ENCODE measurements at regions of chr1 and their contacts with region 1.

Region 1: GRCh38 chr1:10507111-10507879 is 32.5 kb downstream of the PEX14 start:
- H3K4me3 ChIP-seq: no peak overlapping the region
- H3K27ac ChIP-seq: no peak overlapping the region
- H3K4me1 ChIP-seq: peaks cover 6% of the 10 kb centered on the region
- CTCF ChIP-seq: peak; percentile 81

Region 2: GRCh38 chr1:10522322-10522860 is 15.1 kb after region 1 on chr1:
- CTCF ChIA-PET with region 1: interaction called, 19 read pairs
- POLR2A ChIA-PET with region 1: no interaction called
- H3K4me3 ChIP-seq: no peak overlapping the region
- H3K27ac ChIP-seq: no peak overlapping the region
- H3K4me1 ChIP-seq: no peaks in the 10 kb centered on the region
- CTCF ChIP-seq: no peak

Region 3: DNA sequence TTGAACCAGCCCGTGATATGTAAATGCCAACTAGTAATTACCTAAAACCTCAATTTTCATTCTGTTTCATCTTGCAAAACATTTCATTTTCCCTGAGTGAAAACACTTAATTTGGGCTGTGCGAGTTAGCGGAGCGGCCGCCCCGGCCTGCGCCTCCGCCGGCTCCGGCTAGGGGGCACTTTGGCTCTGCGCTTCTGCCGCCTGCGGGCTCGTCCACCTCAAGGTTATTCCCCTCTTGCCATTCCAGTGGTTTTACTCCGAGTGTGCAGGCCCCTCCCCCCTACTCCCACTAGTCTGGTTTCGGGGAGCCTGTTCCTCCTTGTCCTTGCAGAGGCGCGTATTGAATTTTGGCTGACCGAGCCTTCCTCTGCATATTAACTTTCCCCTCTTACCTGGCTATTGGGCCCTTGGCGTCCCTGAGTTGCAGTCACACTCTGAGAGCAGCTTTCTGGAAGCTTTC is 23.0 kb after region 1 on chr1:
- CTCF ChIA-PET with region 1: interaction called, 22 read pairs
- POLR2A ChIA-PET with region 1: no interaction called
- H3K4me3 ChIP-seq: no peak overlapping the region
- H3K27ac ChIP-seq: no peak overlapping the region
- H3K4me1 ChIP-seq: no peaks in the 10 kb centered on the region
- CTCF ChIP-seq: no peak

Region 4: DNA sequence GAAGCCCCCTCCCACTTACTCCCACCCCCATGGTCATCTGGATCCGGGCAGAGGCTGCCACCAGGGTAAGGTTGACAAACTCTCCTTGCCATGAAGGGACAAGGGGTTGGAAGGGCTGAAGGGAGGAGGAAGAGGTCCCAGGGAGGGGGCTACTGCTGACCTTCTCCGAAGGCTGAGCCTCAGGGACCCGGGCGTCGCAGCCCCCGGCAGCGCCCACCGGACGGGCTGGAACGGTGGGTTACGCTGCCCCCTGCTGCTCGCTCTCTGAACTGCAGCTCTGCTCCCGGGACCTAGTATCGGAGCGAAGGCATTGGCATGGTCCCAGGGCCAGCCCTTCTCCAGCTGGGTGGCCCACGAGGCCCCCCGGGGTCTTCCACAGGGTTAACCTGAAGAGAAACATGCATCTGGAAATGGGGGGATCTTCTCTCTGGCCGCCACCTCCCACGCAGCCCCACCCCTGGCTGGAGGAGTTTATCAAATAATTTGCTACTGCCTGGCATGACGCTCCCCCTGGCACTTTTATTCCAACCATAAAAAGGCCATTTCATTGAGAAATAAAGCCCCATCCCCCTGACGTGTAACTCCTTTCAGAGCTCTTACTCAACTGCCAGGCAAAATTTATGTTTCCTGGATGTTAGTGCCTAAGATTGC is 434.7 kb after region 1 on chr1:
- CTCF ChIA-PET with region 1: interaction called, 13 read pairs
- POLR2A ChIA-PET with region 1: no interaction called
- H3K4me3 ChIP-seq: no peak overlapping the region; the same call in 1 of the 2 replicates
- H3K27ac ChIP-seq: no peak overlapping the region
- H3K4me1 ChIP-seq: peaks cover 3% of the 10 kb centered on the region; the same call in 1 of the 2 replicates
- CTCF ChIP-seq: peak; percentile 90

Measured in HEK293 (cell line).